ENCODE measurements at regions of chr17 and their contacts with region 1.

Region 1: GRCh38 chr17:77349976-77350830 is 209.4 kb downstream of the SEC14L1 start:
- DNase-seq: no peak

Region 2: DNA sequence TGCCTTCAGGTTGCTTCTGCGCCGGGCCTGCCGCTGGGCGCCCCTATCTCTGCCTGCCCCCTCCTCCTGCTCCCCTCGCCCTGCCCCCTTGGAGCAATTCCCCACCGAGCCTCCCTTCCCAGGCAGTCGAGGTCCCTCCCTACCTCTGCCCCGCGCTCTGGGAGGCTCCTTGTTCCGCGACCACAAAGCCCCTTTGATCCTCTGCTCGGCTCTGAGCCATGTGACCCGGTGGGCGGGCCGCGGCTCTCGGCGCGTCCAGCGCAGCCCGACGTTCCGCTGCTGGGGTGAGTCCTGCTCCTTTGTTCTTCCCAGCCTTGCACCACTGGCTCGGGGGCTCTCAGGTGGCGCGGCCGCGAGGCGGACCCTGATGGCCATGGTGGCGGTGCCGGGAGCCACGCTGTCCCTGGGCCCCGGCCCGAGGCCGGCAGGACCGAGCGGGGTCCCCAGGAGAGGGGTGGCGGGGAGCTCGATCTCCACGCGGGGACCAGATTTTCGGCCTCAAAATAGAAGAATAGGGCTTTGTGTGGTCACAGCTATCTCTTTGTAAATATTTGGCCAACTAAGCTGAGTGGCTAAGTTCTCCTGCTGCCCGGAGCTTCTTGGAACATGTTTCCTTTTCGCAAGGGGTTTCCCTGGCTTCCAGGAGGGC is 101.2 kb after region 1 on chr17:
- in situ Hi-C with region 1: loop called (anchors 10 kb)
- DNase-seq: peak; percentile 99

Region 3: DNA sequence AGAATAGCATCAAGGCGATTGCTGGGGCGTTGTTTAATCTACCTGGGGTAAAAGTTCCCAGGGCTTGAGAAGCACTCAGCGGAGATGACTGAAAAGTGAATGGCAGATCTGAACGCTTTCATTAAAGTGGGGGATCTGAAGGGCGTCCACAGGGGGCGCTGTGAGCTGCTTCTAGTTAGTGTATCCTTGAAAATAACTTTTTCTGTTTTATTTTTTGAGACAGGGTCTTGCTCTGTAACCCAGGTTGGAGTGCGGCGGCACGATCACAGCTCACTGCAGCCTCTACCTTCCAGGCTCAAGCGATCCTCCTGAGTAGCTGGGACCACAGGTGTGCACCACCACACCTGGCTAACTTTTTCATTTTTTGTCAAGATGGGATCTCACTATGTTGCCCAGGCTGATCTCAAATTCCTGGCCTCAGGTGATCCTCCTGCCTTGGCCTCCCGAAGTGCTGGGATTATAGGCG is 150.9 kb after region 1 on chr17:
- in situ Hi-C with region 1: no loop called
- DNase-seq: peak; percentile 74

Measured in SK-MEL-5 (cell line).